ENCODE measurements at regions of chr4 and their contacts with region 1.

Region 1: GRCh38 chr4:17614416-17615299 is at the start of gene MED28:
- H3K4me3 Mint-ChIP-seq: peak within 1 kb of the TSS; percentile 91
- H3K27ac Mint-ChIP-seq: peak within 1 kb of the TSS; percentile 98
- H3K4me1 Mint-ChIP-seq: peaks cover 37% of the 10 kb centered on the region
- H3K27me3 Mint-ChIP-seq: no peaks in the 10 kb centered on the region

Region 2: GRCh38 chr4:17576932-17577665 is 37.6 kb before region 1 on chr4 and contains the start of gene LAP3:
- intact Hi-C with region 1: loop called (anchors 1 kb)
- H3K4me3 Mint-ChIP-seq: peak within 1 kb of the TSS; percentile 97
- H3K27ac Mint-ChIP-seq: peak within 1 kb of the TSS; percentile 98
- H3K4me1 Mint-ChIP-seq: peaks cover 43% of the 10 kb centered on the region
- H3K27me3 Mint-ChIP-seq: no peaks in the 10 kb centered on the region

Region 3: DNA sequence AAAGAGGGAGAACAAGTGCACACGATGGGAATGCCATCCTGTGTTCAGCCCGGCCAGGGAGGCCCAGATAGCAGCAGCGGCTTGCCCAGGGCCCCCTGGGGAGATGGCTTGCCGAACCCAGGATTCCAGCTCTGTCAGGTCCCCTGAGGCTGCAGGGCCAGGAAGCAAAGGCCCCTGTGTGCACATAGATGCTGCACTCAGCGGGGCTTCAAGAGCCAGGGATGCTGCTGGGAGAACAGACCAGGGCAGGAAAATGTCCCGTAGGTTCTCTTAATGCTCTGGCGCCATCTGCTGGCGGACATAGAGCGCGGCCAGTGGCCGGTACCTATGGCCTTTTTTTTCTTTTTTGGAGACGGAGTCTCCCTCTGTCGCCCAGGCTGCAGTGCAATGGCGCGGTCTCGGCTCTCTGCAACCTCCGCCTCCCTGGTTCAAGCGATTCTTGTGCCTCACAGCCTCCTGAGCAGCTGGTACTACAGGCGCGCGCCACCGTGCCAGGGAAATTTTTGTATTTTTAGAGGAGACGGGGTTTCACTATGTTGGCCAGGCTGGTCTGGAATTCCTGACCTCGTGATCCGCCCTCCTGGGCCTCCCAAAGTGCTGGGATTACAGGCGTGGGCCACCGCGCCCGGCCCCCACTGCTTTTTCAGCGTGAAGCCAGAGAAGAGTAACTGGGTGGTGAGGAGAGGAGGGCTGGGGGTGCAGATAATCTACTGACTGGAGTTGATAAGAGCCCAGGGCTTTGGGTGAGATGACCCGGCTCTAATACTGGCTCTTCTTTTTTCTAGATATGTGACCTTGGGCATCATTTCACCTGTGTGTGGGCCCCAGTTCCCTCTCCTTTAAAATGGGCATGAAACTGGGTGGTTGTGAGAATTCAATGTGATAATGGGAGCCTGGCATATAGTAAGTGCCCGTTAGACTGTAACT is 22.3 kb after region 1 on chr4:
- intact Hi-C with region 1: loop called (anchors 2 kb)
- H3K4me3 Mint-ChIP-seq: no peak overlapping the region
- H3K27ac Mint-ChIP-seq: no peak overlapping the region
- H3K4me1 Mint-ChIP-seq: peaks cover 11% of the 10 kb centered on the region
- H3K27me3 Mint-ChIP-seq: no peaks in the 10 kb centered on the region

Region 4: DNA sequence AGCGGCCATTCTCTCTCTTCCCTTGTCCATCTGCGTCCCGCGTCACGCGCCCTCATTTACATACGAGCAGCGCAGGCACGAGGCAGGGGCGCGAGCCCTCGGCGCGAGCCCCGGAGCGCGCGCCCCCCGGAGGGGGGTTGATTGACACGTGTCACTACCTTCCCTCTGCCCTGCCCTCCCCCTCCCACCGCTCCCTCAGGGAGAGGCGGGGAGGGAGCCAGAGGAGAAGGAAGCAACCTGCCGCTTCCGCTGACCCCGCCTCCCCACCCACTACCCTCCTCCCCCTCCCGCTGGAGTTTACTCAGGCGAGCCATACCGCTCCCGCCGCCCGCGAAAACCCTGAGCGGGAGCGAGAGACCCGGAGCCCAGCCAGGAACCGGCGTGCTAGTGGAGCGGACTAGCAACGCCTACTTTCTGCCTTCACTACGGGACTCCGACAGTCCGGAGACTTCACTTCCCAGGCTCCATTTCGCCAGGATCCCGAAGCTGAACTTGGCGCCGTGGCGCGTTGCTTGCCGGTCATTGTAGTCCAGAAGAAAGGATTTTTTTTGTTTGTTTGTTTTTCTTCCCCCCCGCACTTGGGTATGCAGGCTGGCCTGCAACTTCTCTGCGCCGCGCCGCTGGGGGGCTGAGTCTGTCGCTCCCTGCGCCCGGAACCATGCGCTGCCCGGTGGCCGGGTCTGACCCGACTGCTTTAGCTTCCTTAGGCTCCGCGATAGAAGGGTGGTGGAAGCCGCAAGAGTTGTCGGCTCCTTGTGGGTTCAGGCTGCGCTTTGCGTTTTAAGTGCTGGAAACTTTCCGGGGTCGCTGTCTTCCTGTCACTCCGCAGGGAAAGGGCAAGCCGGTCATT is 407.3 kb after region 1 on chr4 and contains the start of gene LCORL:
- intact Hi-C with region 1: loop called (anchors 2 kb)
- H3K4me3 Mint-ChIP-seq: peak within 1 kb of the TSS; percentile 90
- H3K27ac Mint-ChIP-seq: peak within 1 kb of the TSS; percentile 99
- H3K4me1 Mint-ChIP-seq: peaks cover 15% of the 10 kb centered on the region
- H3K27me3 Mint-ChIP-seq: peaks cover 15% of the 10 kb centered on the region